Aorta (tissue), 5 donors: ENCODE measurements at regions of chr4 and their contacts with region 1.

Region 1: DNA sequence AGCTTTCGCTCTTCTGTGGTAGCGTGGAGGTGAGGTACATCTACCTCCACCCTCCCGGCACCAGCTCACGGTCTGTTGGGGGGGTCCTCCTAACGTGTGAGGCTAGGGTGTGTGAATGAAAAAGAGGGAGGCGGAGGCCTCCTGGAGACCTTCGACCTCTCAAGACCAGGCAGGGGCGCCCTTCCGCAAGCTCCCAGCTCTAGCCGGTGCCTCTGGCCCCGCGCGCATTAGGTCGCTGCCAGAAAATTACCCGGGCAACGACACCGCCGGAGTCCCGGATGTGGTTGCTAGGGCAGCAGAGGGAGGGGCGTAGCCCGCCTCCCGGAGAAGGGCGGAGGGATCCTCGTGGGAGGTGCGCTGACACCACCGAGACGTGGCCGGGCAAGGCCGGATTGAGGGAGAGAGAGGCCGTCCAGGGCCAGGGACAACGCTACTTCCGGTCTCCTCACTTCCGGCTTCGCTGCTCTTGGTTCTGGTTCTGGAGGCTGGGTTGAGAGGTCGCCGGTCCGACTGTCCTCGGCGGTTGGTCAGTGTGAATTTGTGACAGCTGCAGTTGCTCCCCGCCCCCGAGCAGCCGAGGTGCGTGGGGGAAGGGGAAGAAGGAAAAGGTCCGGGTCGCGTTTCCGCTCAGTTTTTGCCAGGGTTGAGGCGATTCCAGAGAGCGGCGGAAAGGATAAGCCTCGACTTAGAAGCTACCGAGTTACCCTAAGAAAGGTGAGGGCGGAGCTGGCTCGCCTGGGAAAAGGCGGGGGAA is at the starts of genes ARFIP1 and TIGD4:
- DNase-seq: peak; percentile 99
- ATAC-seq: peak; percentile 100
- H3K4me3 ChIP-seq: peak within 1 kb of the TSS; percentile 81 to 85
- H3K27ac ChIP-seq: peak within 1 kb of the TSS in 1 of 2 donors; percentile 59
- H3K4me1 ChIP-seq: no peaks in the 10 kb centered on the region
- H3K27me3 ChIP-seq: no peaks in the 10 kb centered on the region
- total RNA-seq, gene ARFIP1: 28.9 to 30.4 TPM
- total RNA-seq, gene TIGD4: 0.30 to 0.32 TPM

Region 2: DNA sequence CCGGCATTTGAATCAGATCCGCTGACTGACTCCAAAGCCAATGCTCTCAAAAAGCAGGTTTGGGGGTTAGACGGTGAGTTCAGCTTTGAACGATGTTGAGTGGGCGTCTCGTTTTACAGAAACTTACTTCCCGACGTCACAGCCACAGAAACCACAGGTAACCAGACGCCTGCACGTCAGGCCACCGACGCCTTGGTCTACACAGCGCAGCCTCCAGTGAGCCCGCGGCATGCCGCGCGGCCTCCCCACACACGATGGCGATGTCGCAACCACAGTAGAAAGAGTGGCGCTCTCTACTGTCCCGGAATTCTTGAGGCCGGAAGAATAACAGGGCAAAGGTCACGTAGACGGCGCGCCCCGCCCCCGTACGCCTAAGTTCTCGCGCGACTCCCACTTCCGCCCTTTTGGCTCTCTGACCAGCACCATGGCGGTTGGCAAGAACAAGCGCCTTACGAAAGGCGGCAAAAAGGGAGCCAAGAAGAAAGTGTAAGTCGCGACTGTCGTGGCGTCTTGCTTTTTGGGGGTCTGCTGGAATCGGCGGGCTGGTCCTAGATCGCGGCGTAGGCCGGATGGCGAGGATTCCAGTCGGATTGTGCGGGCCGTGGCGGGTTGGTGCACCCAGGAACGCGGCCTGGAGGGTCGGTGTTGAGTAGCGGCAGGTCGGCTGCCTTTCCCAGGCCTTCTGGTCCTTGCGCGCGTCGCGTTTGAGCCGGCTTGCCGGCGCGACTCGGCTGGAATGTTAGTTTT is 1680.3 kb before region 1 on chr4 and contains the start of gene RPS3A:
- intact Hi-C with region 1: loop called in 1 of 2 experiments (anchors 10 kb)
- DNase-seq: peak; percentile 97 to 98
- ATAC-seq: peak; percentile 99
- H3K4me3 ChIP-seq: peak within 1 kb of the TSS; percentile 66 to 86
- H3K27ac ChIP-seq: peak within 1 kb of the TSS; percentile 28 to 52
- H3K4me1 ChIP-seq: no peaks in the 10 kb centered on the region
- H3K27me3 ChIP-seq: no peaks in the 10 kb centered on the region
- total RNA-seq, gene RPS3A: 1,314 to 1,517 TPM

Region 3: GRCh38 chr4:152535903-152536544 is 243.7 kb before region 1 on chr4 and contains the start of gene FBXW7:
- intact Hi-C with region 1: loop called (anchors 5 to 10 kb)
- DNase-seq: peak; percentile 99 to 100
- ATAC-seq: peak; percentile 99
- H3K4me3 ChIP-seq: peak within 1 kb of the TSS; percentile 73 to 94
- H3K27ac ChIP-seq: peak within 1 kb of the TSS; percentile 37 to 66
- H3K4me1 ChIP-seq: peaks cover 0 to under 1% of the 10 kb centered on the region in 2 donors
- H3K27me3 ChIP-seq: no peaks in the 10 kb centered on the region
- total RNA-seq, gene FBXW7: 56.3 to 62.7 TPM